A549 (cell line): ENCODE measurements at regions of chr7 and their contacts with region 1.

Region 1: DNA sequence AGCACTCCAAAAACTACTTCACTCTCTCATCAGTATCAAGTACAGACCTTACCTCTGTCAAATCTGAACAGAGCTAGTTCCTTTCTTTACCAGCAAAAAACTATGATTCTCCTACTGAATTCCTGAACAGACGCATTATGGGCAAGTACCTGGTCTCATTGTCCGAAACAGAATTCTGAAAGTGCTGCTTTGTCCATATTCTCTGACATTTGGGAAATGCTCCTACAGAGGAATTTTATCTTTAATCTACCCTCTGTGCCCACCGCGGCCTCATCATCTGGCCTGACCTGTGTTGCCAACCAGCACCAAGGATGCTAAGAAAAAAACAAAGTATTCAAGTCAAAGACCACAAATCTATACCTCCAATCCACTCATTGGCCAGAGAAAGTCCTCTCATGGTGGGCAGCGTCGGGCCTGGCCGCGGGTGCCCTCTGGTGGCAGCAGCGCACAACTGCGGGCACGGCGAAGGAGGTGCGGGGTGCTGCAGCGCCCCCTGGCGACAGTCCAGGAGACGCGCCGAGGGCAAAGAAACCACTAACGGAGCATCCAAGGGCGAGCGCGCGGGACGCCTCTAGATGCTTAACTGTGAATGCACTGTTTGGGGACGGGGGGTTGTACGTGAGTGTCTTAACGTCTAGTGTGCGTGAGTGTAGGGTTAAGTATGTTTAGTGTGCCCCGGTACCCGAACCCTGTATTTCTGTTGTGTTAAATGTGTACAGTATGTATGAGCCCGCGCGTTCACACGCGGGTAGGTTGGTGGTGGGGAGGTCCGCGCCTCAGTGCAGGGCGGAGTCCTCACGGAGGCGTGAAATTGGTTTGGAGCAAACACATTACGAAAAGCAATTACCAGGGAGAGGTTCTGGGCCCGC is 5.0 kb upstream of the GBX1 start:
- DNase-seq: peak; percentile 61 to 77
- ATAC-seq: peak; percentile 54 to 80
- H3K4me3 ChIP-seq: no peak overlapping the region
- H3K27ac ChIP-seq: no peak overlapping the region
- H3K4me1 ChIP-seq: no peaks in the 10 kb centered on the region
- CTCF ChIP-seq: peak; percentile 100
- EP300 ChIP-seq: no peak
- POLR2A ChIP-seq: no peak
- RAD21 ChIP-seq: peak; percentile 88 to 90

Region 2: GRCh38 chr7:151123822-151124464 is 48.6 kb before region 1 on chr7:
- CTCF ChIA-PET with region 1: interaction called, 63 read pairs
- POLR2A ChIA-PET with region 1: no interaction called
- DNase-seq: peak; percentile 85 to 94
- ATAC-seq: peak; percentile 90 to 96
- H3K4me3 ChIP-seq: no peak overlapping the region
- H3K27ac ChIP-seq: no peak overlapping the region
- H3K4me1 ChIP-seq: no peaks in the 10 kb centered on the region
- CTCF ChIP-seq: peak; percentile 97
- EP300 ChIP-seq: no peak
- POLR2A ChIP-seq: no peak
- RAD21 ChIP-seq: peak; percentile 85 to 87

Region 3: DNA sequence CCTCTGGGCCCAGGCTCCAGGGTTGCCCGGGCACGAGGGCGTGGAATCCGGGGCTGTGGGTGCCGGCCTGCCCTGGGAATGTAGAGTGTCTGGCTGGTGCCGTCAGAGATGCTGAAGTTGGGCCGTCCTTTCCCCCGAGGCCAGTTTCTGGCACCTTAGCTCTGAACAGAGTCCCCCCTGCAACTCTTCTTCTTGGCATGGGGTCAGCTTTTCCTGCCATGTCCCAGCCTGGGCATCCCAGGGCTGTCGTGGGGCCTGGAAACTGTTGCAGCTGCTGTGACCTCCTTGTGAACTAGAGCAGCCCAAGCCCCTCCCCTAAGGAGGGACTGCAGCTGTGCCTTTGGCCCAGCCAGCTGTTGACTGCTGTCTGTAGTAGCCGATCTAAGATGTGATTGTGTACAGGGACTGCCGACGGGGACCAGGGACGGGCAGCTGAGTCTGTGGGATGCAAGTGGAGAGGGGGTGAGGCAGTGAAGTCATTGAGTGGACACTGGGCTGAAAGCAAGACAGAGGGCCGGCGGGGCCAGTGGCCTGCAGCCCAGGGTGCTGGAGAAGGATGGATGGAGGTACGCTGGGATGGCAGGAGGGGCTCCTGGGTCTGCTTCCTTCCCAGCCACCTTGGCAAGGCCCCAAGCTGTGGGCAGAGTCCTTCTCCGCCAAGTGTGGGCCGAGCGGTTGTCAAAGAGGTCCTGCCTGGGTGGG is 40.8 kb before region 1 on chr7:
- CTCF ChIA-PET with region 1: interaction called, 63 read pairs
- POLR2A ChIA-PET with region 1: no interaction called
- DNase-seq: no peak
- ATAC-seq: no peak
- H3K4me3 ChIP-seq: no peak overlapping the region
- H3K27ac ChIP-seq: no peak overlapping the region
- H3K4me1 ChIP-seq: no peaks in the 10 kb centered on the region
- CTCF ChIP-seq: no peak
- EP300 ChIP-seq: no peak
- POLR2A ChIP-seq: no peak
- RAD21 ChIP-seq: no peak

Region 4: DNA sequence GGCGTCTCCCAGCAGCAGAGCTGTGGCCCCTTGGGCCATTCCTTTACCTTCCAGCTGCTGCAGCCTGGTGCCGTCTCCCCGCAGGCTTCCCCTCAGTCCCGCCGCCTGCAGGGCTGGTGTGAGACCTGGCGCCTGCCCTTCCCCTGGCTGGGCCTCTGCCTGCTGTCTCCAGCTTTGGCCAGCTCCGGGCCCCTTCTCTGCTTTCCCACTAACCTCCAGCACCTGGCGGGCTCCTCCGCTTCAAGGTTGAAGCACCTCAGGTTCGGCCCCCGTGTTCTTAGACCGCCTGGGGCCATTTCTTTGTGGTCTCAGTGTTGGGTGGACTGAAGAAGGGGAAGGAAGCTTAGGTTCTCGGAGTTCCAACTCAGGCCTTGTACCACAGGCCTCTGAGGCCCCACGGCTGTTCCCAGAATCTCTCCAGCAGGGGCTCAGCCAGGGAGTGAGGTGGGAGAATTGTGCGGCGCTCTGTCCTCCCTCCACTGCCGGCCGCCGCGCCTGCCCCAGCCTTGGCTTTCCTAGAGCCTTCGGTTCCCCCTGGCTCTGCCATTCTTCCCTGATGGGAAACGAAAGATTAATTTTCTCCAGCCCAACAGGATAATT is 35.3 kb before region 1 on chr7:
- CTCF ChIA-PET with region 1: interaction called, 25 read pairs
- POLR2A ChIA-PET with region 1: no interaction called
- DNase-seq: no peak
- ATAC-seq: no peak
- H3K4me3 ChIP-seq: no peak overlapping the region
- H3K27ac ChIP-seq: no peak overlapping the region
- H3K4me1 ChIP-seq: no peaks in the 10 kb centered on the region
- CTCF ChIP-seq: no peak
- EP300 ChIP-seq: no peak
- POLR2A ChIP-seq: no peak
- RAD21 ChIP-seq: no peak

Region 5: GRCh38 chr7:151143261-151144015 is 29.1 kb before region 1 on chr7:
- CTCF ChIA-PET with region 1: interaction called, 22 read pairs
- POLR2A ChIA-PET with region 1: no interaction called
- DNase-seq: no peak
- ATAC-seq: no peak
- H3K4me3 ChIP-seq: no peak overlapping the region
- H3K27ac ChIP-seq: no peak overlapping the region
- H3K4me1 ChIP-seq: no peaks in the 10 kb centered on the region
- CTCF ChIP-seq: no peak
- EP300 ChIP-seq: no peak
- POLR2A ChIP-seq: no peak
- RAD21 ChIP-seq: no peak

Region 6: DNA sequence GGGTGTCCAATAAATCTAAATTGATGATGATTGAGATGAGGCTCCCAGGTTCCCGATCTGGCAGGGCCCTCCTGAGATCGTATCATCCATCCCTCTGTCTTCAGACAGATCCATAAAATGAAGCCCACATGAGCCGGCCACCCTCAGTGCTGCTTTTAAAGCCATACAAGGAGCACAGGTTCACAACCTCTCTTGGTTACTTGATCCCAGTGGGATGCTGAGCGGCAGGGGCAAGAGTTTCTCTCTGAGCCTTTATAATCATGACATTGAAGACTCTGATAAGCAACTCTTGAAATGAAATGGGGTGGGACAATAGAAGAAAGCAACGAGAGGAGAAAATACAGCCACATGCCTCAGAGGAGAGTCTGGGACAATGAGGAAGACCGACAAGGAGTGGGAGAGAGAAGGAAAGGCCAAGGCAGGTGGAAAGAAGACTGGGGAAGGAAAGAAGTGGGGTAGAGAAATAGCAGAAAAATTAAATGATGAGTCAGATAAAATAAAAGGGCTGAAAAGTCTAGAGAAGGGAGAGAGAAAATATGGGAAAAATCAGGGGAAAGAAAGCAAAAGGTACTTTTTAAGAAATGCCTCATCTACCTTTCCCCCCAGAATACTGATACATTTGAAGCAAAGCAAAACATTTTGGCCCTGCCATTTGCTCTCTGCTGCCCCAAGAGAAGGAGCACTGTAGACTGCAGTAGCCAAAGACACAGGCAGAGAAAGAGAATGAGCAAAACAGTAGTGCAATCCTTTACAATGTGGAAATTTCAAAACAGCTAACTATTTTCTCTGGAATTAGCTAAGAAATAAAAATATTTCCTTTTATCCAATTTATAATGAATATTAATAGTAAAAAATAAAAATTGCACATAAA is 19.6 kb before region 1 on chr7:
- CTCF ChIA-PET with region 1: interaction called, 55 read pairs
- POLR2A ChIA-PET with region 1: no interaction called
- DNase-seq: no peak
- ATAC-seq: peak; percentile 49; a peak in 2 of 6 replicates
- H3K4me3 ChIP-seq: no peak overlapping the region
- H3K27ac ChIP-seq: no peak overlapping the region
- H3K4me1 ChIP-seq: peaks cover 7% of the 10 kb centered on the region; the same call in 2 of the 3 replicates
- CTCF ChIP-seq: no peak
- EP300 ChIP-seq: no peak
- POLR2A ChIP-seq: no peak
- RAD21 ChIP-seq: no peak

Region 7: GRCh38 chr7:151244196-151244840 is 71.8 kb after region 1 on chr7:
- CTCF ChIA-PET with region 1: interaction called, 13 read pairs
- POLR2A ChIA-PET with region 1: no interaction called
- DNase-seq: peak; percentile 42 to 73
- ATAC-seq: no peak
- H3K4me3 ChIP-seq: no peak overlapping the region
- H3K27ac ChIP-seq: no peak overlapping the region
- H3K4me1 ChIP-seq: peaks cover 53% of the 10 kb centered on the region
- CTCF ChIP-seq: peak; percentile 82
- EP300 ChIP-seq: no peak
- POLR2A ChIP-seq: no peak
- RAD21 ChIP-seq: peak; percentile 48 to 54

Region 8: GRCh38 chr7:151566897-151567320 is 394.4 kb after region 1 on chr7:
- CTCF ChIA-PET with region 1: no interaction called
- POLR2A ChIA-PET with region 1: no interaction called
- DNase-seq: no peak
- ATAC-seq: no peak
- H3K4me3 ChIP-seq: no peak overlapping the region
- H3K27ac ChIP-seq: no peak overlapping the region
- H3K4me1 ChIP-seq: no peaks in the 10 kb centered on the region
- CTCF ChIP-seq: no peak
- EP300 ChIP-seq: no peak
- POLR2A ChIP-seq: no peak
- RAD21 ChIP-seq: no peak